Activated CD4-positive, alpha-beta T cell treated with anti-CD3 and anti-CD28 coated beads, Interleukin-2, amount 10 ng/mL, durations not matched to agents 7 days and 5 days (primary cell): ENCODE measurements at regions of chr6 and their contacts with region 1.

Region 1: DNA sequence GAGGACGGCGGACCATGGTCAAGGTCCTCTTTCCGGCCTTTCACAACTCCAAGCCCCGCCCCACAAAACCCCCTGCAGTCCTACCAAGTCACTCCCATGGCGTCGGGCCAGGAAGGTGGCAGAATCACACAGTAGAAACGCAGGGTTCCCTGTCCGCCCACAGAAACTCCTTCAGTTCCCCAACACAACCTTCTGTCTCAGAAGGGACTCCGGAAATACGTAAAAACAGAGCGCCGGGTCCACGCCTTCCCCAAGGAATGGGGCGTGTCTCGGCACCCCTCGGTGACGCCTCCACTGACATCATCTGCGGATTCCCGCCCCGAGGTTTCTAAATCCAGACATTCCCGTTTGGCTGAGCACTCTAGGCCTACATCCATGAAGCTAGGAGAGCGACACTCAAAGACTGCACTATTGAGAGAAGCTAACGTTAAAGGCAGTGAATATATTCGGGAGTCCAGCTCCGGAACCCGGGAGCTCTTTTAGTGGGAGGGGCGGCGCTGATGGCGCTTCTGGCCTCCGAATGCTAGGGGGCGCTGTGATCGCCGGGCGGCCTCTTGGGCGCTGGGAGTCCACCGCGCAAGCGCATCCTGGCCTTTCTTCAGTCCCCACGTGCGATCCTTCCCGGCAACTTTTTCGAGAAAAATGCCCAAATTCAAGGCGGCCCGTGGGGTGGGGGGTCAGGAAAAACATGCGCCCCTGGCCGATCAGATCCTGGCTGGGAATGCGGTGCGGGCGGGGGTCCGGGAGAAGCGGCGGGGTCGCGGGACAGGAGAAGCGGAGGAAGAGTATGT is at the starts of genes BYSL and MED20:
- DNase-seq: peak; percentile 95
- H3K4me3 Mint-ChIP-seq: peak within 1 kb of the TSS; percentile 100
- H3K27ac Mint-ChIP-seq: peak within 1 kb of the TSS; percentile 98
- H3K4me1 Mint-ChIP-seq: peaks cover 57% of the 10 kb centered on the region
- H3K27me3 Mint-ChIP-seq: no peaks in the 10 kb centered on the region
- total RNA-seq, gene BYSL: 29.3 to 29.8 TPM
- total RNA-seq, gene MED20: 18.6 to 22.7 TPM

Region 2: GRCh38 chr6:41895300-41896233 is 25.5 kb before region 1 on chr6 and contains the start of gene USP49:
- CTCF ChIA-PET with region 1: interaction called, 13 read pairs
- POLR2A ChIA-PET with region 1: interaction called, 4 read pairs
- DNase-seq: peak; percentile 92
- H3K4me3 Mint-ChIP-seq: no peak within 1 kb of the TSS
- H3K27ac Mint-ChIP-seq: peak within 1 kb of the TSS; percentile 82
- H3K4me1 Mint-ChIP-seq: peaks cover 16% of the 10 kb centered on the region
- H3K27me3 Mint-ChIP-seq: no peaks in the 10 kb centered on the region
- total RNA-seq, gene USP49: 6.3 to 7.0 TPM

Region 3: GRCh38 chr6:41941280-41942066 is 20.4 kb after region 1 on chr6 and contains the start of gene CCND3:
- CTCF ChIA-PET with region 1: interaction called, 215 read pairs
- POLR2A ChIA-PET with region 1: interaction called, 3 read pairs
- DNase-seq: peak; percentile 92
- H3K4me3 Mint-ChIP-seq: peak within 1 kb of the TSS; percentile 100
- H3K27ac Mint-ChIP-seq: peak within 1 kb of the TSS; percentile 97
- H3K4me1 Mint-ChIP-seq: peaks cover 51% of the 10 kb centered on the region
- H3K27me3 Mint-ChIP-seq: no peaks in the 10 kb centered on the region
- total RNA-seq, gene CCND3: 461 to 520 TPM

Region 4: GRCh38 chr6:42028234-42029061 is 107.3 kb after region 1 on chr6:
- CTCF ChIA-PET with region 1: interaction called, 11 read pairs
- POLR2A ChIA-PET with region 1: no interaction called
- DNase-seq: no peak
- H3K4me3 Mint-ChIP-seq: peak overlapping the region; percentile 52
- H3K27ac Mint-ChIP-seq: peak overlapping the region; percentile 90
- H3K4me1 Mint-ChIP-seq: peaks cover 92% of the 10 kb centered on the region
- H3K27me3 Mint-ChIP-seq: no peaks in the 10 kb centered on the region

Region 5: GRCh38 chr6:42050266-42051032 is 129.3 kb after region 1 on chr6 and contains the start of gene TAF8:
- CTCF ChIA-PET with region 1: interaction called, 412 read pairs
- POLR2A ChIA-PET with region 1: no interaction called
- DNase-seq: peak; percentile 94
- H3K4me3 Mint-ChIP-seq: peak within 1 kb of the TSS; percentile 87
- H3K27ac Mint-ChIP-seq: peak within 1 kb of the TSS; percentile 98
- H3K4me1 Mint-ChIP-seq: peaks cover 73% of the 10 kb centered on the region
- H3K27me3 Mint-ChIP-seq: no peaks in the 10 kb centered on the region
- total RNA-seq, gene TAF8: 53.2 to 60.2 TPM